ENCODE measurements at regions of chr16 and their contacts with region 1.

Region 1: DNA sequence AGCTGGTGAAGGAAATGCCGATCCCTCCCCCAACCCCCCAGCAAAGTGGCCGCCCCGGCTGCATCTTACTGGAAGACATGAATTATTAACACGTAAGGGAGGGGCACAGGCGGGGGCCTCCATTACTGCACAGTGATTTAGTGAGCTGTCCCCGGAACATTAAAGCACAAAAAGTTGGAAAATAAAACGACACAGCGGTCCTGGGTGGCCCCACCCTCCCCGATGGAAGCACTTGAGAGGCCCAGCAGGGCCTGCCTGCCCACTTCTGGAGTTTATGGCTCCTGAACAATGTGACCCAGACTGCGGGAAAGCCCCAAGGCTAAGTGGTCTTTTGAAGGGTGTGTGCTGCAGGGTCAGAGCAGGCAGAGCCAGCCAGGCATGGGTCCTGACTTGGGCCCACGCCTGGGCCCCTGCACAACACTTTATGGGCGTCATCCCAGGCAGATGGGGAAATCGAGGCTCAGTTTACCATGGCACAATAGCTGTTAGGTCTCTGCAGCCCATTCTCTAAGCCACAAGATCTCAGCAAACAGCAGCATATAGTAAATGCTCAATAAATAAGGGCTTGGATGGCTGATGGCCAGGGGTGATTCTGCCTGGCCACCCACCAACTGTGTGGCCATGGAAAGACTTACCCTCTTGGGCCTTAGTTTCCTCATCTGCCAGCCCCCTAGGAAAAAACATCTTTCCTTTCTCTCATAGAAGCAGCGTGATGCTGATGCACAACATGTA is 22.8 kb downstream of the CCDC102A start:
- DNase-seq: no peak
- ATAC-seq: no peak
- H3K4me3 ChIP-seq: no peak overlapping the region
- H3K27ac ChIP-seq: no peak overlapping the region
- H3K4me1 ChIP-seq: peaks cover 32% of the 10 kb centered on the region
- H3K27me3 ChIP-seq: peaks cover 2 to 9% of the 10 kb centered on the region in 2 experiments; a peak in 3 of 5 replicates
- CTCF ChIP-seq: no peak
- EP300 ChIP-seq: no peak
- POLR2A ChIP-seq: no peak
- RAD21 ChIP-seq: no peak

Region 2: DNA sequence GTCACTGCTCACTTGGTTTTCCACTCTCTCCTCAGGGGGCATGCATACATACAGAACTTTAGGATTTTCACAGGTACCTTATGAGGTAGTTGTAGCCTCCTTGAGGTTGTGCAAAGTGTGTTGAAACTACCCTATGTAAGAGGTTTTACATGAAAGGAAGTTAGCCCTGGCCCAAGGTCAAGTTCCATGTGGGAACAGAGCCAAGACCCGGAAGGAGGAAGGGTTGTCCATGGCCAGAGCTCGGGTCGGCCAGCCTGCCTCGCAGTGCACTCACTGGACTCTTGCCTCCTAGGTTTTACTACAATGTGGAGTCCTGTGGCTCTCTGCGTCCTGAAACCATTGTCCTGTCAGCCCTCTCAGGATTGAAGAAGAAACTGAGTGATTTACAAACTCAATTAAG is 42.9 kb before region 1 on chr16:
- CTCF ChIA-PET with region 1: interaction called, 16 read pairs
- POLR2A ChIA-PET with region 1: interaction called, 15 read pairs
- in situ Hi-C with region 1: loop called (anchors 5 kb)
- intact Hi-C with region 1: no loop called
- DNase-seq: no peak
- ATAC-seq: no peak
- H3K4me3 ChIP-seq: no peak overlapping the region
- H3K27ac ChIP-seq: peak overlapping the region; percentile 82
- H3K4me1 ChIP-seq: peaks cover 54% of the 10 kb centered on the region
- H3K27me3 ChIP-seq: no peaks in the 10 kb centered on the region
- CTCF ChIP-seq: no peak
- EP300 ChIP-seq: no peak
- POLR2A ChIP-seq: no peak
- RAD21 ChIP-seq: no peak

Region 3: GRCh38 chr16:57564571-57565270 is 51.2 kb after region 1 on chr16:
- CTCF ChIA-PET with region 1: no interaction called
- POLR2A ChIA-PET with region 1: no interaction called
- in situ Hi-C with region 1: no loop called
- intact Hi-C with region 1: no loop called
- DNase-seq: no peak
- ATAC-seq: no peak
- H3K4me3 ChIP-seq: no peak overlapping the region
- H3K27ac ChIP-seq: no peak overlapping the region
- H3K4me1 ChIP-seq: peaks cover 10% of the 10 kb centered on the region
- H3K27me3 ChIP-seq: peaks cover 4 to 14% of the 10 kb centered on the region in 2 experiments; a peak in 3 of 5 replicates
- CTCF ChIP-seq: no peak
- EP300 ChIP-seq: no peak
- POLR2A ChIP-seq: no peak
- RAD21 ChIP-seq: no peak

Region 4: GRCh38 chr16:57667526-57668258 is 154.2 kb after region 1 on chr16:
- CTCF ChIA-PET with region 1: no interaction called
- POLR2A ChIA-PET with region 1: no interaction called
- in situ Hi-C with region 1: no loop called
- intact Hi-C with region 1: no loop called
- DNase-seq: peak; percentile 91
- ATAC-seq: peak; percentile 93
- H3K4me3 ChIP-seq: peak overlapping the region in 2 of 3 experiments; percentile 50 to 60; a peak in 4 of 6 replicates
- H3K27ac ChIP-seq: peak overlapping the region; percentile 79
- H3K4me1 ChIP-seq: peaks cover 69% of the 10 kb centered on the region
- H3K27me3 ChIP-seq: no peaks in the 10 kb centered on the region
- CTCF ChIP-seq: peak; percentile 79
- EP300 ChIP-seq: peak; percentile 79 to 87
- POLR2A ChIP-seq: peak; percentile 75 to 77
- RAD21 ChIP-seq: peak; percentile 42

Measured in HepG2 (cell line).